GM10248 (cell line): ENCODE measurements at regions of chr1 and their contacts with region 1.

Region 1: DNA sequence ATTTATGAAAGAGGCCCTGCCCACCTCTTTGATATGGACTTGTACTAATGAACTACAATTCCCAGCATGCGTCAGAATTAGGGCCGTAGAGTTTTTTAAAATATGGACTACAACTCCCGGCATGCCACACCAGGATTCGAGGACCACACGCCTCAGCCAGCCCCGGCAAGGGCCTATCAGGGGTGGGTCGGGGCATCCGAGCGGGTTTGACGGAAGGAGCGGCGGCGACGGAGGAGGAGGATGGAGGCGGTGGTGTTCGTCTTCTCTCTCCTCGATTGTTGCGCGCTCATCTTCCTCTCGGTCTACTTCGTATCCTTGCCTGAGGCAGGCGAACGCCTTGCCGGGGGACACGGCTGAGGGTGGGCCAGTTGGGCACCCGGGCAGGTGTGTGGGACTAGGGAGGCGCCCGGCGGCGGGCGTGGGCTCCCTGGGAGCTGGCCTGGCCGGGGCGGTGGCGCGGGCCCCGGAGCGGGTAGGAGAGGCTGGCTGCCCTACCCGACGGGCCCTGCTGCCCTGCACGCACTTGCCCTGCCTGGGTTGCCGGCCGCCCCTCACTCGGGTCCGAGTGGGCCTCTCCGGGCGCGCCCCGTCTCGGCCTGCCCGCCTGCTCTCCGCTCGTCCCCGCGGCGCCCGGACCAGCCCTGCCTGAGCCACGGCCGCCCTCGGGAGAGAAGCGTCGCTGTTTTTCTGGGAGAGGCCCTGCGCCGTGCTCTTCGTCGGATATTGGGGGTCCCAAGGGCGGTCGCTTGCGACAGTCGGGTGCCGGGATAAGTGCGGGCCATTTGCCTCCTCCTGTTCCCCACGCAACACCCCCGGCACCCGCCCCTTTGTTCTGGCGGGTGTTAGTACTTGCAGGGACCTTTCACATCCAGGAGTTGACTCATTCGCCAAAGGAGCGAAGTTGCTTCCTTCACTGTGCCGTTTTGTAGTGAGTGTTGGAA is at the start of gene CNIH4:
- DNase-seq: peak; percentile 94
- CTCF ChIP-seq: no peak

Region 2: DNA sequence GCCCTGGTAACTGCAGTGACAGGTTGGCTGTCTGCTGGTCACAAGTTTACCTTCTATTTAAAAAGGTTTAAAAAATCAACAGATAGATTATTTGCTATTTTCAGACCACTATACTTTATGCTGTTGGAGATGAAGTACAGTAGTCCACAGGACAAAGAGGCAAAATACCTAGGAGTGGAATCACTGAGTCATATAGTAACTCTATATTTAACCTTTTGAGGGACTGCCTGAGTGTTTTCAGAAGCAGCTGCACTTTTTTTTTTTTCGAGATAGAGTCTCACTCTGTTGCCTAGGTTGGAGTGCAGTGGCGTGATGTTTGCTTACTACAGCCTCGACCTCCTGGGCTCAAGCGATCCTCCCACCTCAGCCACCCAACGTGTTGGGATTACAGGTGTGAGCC is 11.5 kb after region 1 on chr1:
- CTCF ChIA-PET with region 1: interaction called, 22 read pairs
- POLR2A ChIA-PET with region 1: no interaction called
- DNase-seq: peak; percentile 32
- CTCF ChIP-seq: no peak